Heart right ventricle (tissue), 16 donors: ENCODE measurements at regions of chr1 and their contacts with region 1.

Region 1: GRCh38 chr1:156980551-156980950 is 60.1 kb downstream of the LRRC71 start:
- DNase-seq: no peak
- ATAC-seq: peak in 2 of 8 donors; percentile 55 to 61
- H3K4me3 ChIP-seq: no peak overlapping the region
- H3K27ac ChIP-seq: no peak overlapping the region
- H3K4me1 ChIP-seq: peaks cover 0 to 13% (median 4%) of the 10 kb centered on the region in 9 donors
- H3K27me3 ChIP-seq: no peaks in the 10 kb centered on the region
- CTCF ChIP-seq: no peak

Region 2: DNA sequence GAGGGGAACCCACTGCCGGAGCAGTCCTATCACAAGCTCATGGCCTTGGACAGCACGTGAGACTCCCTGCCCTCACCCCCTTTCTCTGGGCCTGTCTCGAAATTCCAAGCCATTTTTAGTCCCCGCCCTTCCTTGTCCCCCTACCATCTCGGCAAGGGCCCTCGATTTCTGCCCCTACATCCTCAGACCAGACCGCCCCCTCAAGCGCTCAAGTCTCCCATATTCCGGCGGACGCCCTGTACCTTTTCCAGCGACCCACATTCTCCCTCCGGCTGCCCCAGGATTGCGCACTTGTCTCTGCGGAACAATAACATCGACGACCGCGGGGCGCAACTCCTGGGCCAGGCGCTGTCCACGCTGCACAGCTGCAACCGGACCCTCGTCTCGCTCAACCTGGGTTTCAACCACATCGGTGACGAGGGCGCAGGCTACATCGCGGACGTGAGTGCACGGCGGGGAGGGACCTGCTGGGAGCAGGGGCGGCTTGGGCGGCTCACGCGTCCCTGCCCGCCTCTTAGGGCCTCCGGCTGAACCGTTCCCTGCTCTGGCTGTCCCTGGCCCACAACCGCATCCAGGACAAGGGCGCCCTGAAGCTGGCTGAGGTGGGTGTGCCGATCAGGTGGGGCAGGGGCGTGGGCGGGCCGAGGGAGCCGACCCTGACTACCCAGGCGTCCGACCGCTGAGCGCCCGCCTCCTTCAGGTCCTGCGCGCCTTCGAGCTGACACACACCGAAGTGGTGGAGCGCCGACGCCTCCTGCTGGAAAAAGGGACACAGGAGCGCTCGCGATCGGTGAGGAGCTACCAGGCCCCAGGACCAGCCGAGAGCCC is 53.1 kb before region 1 on chr1:
- intact Hi-C with region 1: no loop called
- DNase-seq: peak; percentile 60 to 76
- ATAC-seq: peak; percentile 53 to 77 (median 70)
- H3K4me3 ChIP-seq: peak overlapping the region in 9 of 10 donors; percentile 14 to 48 (median 37)
- H3K27ac ChIP-seq: no peak overlapping the region
- H3K4me1 ChIP-seq: peaks cover 10 to 38% (median 32%) of the 10 kb centered on the region in 9 donors
- H3K27me3 ChIP-seq: peaks cover 23 to 78% (median 67%) of the 10 kb centered on the region in 7 donors
- CTCF ChIP-seq: peak; percentile 29 to 81 (median 63)

Region 3: GRCh38 chr1:156953571-156953970 is 27.0 kb before region 1 on chr1:
- intact Hi-C with region 1: loop called in 1 of 10 experiments (anchors 2 kb)
- DNase-seq: no peak
- ATAC-seq: no peak
- H3K4me3 ChIP-seq: no peak overlapping the region
- H3K27ac ChIP-seq: no peak overlapping the region
- H3K4me1 ChIP-seq: no peaks in the 10 kb centered on the region
- H3K27me3 ChIP-seq: no peaks in the 10 kb centered on the region
- CTCF ChIP-seq: no peak

Region 4: GRCh38 chr1:157011845-157012244 is 31.3 kb after region 1 on chr1:
- intact Hi-C with region 1: no loop called
- DNase-seq: no peak
- ATAC-seq: no peak
- H3K4me3 ChIP-seq: no peak overlapping the region
- H3K27ac ChIP-seq: no peak overlapping the region
- H3K4me1 ChIP-seq: peaks cover 0 to 27% (median 15%) of the 10 kb centered on the region in 9 donors
- H3K27me3 ChIP-seq: no peaks in the 10 kb centered on the region
- CTCF ChIP-seq: no peak

Region 5: DNA sequence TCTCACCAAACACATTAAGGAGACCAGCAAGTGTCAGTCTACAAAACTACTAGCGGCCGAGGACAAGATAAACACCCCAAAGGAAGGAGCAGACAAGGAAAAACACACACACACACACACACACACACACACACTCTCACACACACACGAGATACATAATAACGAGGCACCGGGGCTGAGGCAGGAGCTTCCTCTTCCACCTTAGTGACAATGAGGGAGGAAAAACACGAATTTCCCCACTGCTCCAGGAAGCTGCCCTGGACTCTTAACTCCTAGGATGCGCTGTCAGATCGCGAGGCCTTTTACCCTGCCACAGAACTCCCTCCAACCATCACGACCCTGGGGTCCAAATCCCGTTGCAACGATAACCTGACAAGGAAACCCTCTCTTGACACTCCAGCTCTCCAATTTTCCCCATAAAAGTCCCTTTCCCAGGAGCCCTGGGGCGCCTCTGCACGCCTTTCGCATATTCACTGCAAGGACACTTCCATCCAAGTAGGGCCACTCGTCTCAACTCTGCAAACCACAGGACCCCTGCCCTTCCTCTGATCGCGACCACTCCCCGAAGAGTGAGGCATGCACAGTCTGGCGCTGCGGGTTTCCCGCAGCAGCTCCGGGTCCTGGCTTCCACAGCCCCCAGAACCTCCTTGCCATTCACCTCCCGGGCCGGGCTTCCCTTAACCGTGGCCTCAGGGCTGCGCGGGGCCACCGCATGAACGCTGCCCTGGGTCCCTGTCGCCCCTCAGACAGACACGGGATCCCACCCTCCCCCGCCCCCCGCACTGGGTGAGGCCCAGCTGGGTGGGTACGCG is 157.1 kb after region 1 on chr1:
- intact Hi-C with region 1: no loop called
- DNase-seq: no peak
- ATAC-seq: peak in 6 of 8 donors; percentile 1 to 35 (median 18)
- H3K4me3 ChIP-seq: peak overlapping the region; percentile 89 to 99 (median 98)
- H3K27ac ChIP-seq: peak overlapping the region; percentile 97 to 99 (median 98)
- H3K4me1 ChIP-seq: peaks cover 5 to 49% (median 24%) of the 10 kb centered on the region in 9 donors
- H3K27me3 ChIP-seq: no peaks in the 10 kb centered on the region
- CTCF ChIP-seq: no peak